Activated B cell treated with CpG ODN at 0.5 μM for 24 hours (primary cell): ENCODE measurements at regions of chr13 and their contacts with region 1.

Region 1: DNA sequence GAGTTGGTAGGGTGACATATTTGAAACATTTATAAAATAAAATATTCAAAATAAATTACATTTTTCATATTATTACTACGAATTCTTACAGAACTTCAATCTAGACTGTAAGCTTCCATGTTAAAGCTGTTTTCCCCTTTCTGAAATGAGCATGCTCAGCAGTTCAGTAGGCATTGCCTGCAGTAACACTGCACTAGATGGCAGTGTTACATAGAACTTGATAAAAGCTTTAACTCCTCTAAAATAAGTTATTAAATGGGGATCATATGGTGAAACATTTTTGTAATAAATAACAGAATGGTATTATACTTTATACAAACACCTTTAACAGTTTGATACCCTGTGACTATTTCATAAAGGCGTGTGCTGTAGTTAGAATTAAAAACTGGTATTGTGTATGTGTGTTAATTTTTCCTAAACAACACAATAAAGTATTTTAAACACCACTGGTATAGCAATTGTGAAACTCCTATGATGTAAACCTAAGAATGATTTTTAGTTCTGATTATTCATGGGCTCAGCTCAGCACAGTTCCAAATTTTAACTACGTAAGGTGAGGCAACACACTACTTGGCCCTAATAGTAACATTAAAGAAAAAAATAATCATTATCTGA is 11.6 kb upstream of the GPR18 start:
- DNase-seq: no peak
- ATAC-seq: peak; percentile 70
- H3K4me3 Mint-ChIP-seq: no peak overlapping the region
- H3K27ac Mint-ChIP-seq: peak overlapping the region; percentile 74
- H3K4me1 Mint-ChIP-seq: peaks cover 65% of the 10 kb centered on the region
- H3K27me3 Mint-ChIP-seq: no peaks in the 10 kb centered on the region
- CTCF ChIP-seq: peak; percentile 48

Region 2: DNA sequence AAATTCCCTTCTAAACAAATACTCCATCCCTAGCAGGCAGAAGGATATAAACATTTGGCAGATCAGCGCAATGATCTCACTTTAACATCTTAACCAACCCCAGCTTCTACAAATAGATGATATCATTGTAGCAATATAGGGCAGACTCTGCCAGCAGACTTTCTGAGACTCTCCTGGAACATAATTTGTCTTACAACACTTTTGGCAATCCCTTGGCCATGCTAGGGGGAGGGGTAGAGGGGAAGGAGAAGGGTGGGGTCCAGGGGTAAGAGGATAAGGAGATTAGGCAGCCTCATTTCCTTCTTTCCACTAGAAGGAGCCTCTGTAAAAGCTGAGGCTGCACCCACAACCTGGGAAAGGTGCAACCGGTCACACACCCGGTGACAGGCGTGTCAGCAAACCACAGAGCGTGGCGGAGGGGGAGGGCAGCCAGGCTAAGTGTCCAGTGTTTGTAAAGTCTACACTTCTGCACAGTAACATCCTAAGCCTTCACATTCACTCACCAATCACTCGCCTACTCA is 77.8 kb before region 1 on chr13:
- CTCF ChIA-PET with region 1: interaction called, 157 read pairs
- POLR2A ChIA-PET with region 1: interaction called, 4 read pairs
- intact Hi-C with region 1: loop called (anchors 1 kb)
- DNase-seq: no peak
- ATAC-seq: no peak
- H3K4me3 Mint-ChIP-seq: no peak overlapping the region
- H3K27ac Mint-ChIP-seq: no peak overlapping the region
- H3K4me1 Mint-ChIP-seq: peaks cover 20% of the 10 kb centered on the region
- H3K27me3 Mint-ChIP-seq: no peaks in the 10 kb centered on the region
- CTCF ChIP-seq: no peak

Region 3: DNA sequence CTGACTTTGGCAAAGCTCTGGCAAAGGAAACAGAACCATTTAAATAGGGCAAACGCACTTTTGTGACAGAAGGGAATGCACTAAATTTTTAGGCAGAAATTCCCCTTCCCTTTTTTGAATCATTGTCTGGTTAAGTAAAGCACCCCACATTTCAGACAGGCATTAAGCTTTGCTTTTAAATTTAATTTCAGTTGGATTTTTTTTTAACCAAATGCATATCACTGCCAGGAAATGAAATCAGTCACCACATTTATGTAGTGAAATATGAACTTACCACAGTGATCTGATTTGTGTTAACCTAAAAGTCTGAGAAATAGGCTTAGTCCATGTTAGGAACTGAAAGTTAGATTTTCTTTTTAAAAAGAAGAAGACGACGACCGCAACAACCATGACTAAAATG is 26.7 kb after region 1 on chr13:
- CTCF ChIA-PET with region 1: interaction called, 43 read pairs
- POLR2A ChIA-PET with region 1: interaction called, 10 read pairs
- intact Hi-C with region 1: no loop called
- DNase-seq: no peak
- ATAC-seq: peak; percentile 45
- H3K4me3 Mint-ChIP-seq: peak overlapping the region; percentile 74
- H3K27ac Mint-ChIP-seq: peak overlapping the region; percentile 92
- H3K4me1 Mint-ChIP-seq: peaks cover 87% of the 10 kb centered on the region
- H3K27me3 Mint-ChIP-seq: no peaks in the 10 kb centered on the region
- CTCF ChIP-seq: no peak

Region 4: DNA sequence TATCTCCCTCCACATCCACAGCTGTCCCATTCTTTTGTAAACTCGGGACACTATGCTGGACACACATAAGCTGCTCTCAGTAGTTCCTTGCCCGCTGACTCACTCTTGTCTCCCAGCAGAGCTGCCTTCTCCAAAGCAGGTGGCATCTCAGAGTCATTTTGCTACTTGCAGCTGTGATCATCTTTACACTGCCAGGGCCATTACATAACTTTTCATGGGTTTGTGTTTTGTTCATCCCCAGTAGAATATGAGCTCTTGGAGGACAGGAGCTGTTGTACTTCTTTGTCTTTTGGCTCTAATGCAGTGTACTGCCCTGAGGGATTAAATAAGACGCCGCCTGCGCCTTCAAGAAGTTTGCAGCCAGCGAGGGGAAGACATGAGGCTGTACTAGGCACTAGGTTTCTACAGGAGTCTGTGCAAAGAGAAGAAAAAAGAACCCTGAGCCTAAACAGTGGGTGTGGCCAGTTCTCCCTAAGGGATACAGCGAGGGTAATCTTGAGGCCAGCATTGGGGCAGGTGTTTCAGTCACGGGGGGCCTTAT is 78.2 kb after region 1 on chr13:
- CTCF ChIA-PET with region 1: interaction called, 19 read pairs
- POLR2A ChIA-PET with region 1: interaction called, 5 read pairs
- intact Hi-C with region 1: no loop called
- DNase-seq: no peak
- ATAC-seq: peak; percentile 68
- H3K4me3 Mint-ChIP-seq: peak overlapping the region; percentile 50
- H3K27ac Mint-ChIP-seq: peak overlapping the region; percentile 82
- H3K4me1 Mint-ChIP-seq: peaks cover 63% of the 10 kb centered on the region
- H3K27me3 Mint-ChIP-seq: no peaks in the 10 kb centered on the region
- CTCF ChIP-seq: no peak

Region 5: GRCh38 chr13:99386911-99387788 is 117.4 kb after region 1 on chr13:
- CTCF ChIA-PET with region 1: interaction called, 217 read pairs
- POLR2A ChIA-PET with region 1: interaction called, 32 read pairs
- intact Hi-C with region 1: loop called (anchors 1 kb)
- DNase-seq: peak; percentile 81
- ATAC-seq: peak; percentile 78
- H3K4me3 Mint-ChIP-seq: peak overlapping the region; percentile 12
- H3K27ac Mint-ChIP-seq: peak overlapping the region; percentile 84
- H3K4me1 Mint-ChIP-seq: peaks cover 43% of the 10 kb centered on the region
- H3K27me3 Mint-ChIP-seq: no peaks in the 10 kb centered on the region
- CTCF ChIP-seq: peak; percentile 94

Region 6: GRCh38 chr13:99489028-99489427 is 219.3 kb after region 1 on chr13:
- CTCF ChIA-PET with region 1: no interaction called
- POLR2A ChIA-PET with region 1: no interaction called
- intact Hi-C with region 1: no loop called
- DNase-seq: no peak
- ATAC-seq: no peak
- H3K4me3 Mint-ChIP-seq: no peak overlapping the region
- H3K27ac Mint-ChIP-seq: no peak overlapping the region
- H3K4me1 Mint-ChIP-seq: no peaks in the 10 kb centered on the region
- H3K27me3 Mint-ChIP-seq: no peaks in the 10 kb centered on the region
- CTCF ChIP-seq: no peak

Region 7: GRCh38 chr13:99566125-99567083 is 296.7 kb after region 1 on chr13:
- CTCF ChIA-PET with region 1: no interaction called
- POLR2A ChIA-PET with region 1: interaction called, 12 read pairs
- intact Hi-C with region 1: no loop called
- DNase-seq: no peak
- ATAC-seq: peak; percentile 14
- H3K4me3 Mint-ChIP-seq: peak overlapping the region; percentile 64
- H3K27ac Mint-ChIP-seq: peak overlapping the region; percentile 37
- H3K4me1 Mint-ChIP-seq: peaks cover 2% of the 10 kb centered on the region
- H3K27me3 Mint-ChIP-seq: no peaks in the 10 kb centered on the region
- CTCF ChIP-seq: no peak